ENCODE measurements at regions of chr2 and their contacts with region 1.

Region 1: DNA sequence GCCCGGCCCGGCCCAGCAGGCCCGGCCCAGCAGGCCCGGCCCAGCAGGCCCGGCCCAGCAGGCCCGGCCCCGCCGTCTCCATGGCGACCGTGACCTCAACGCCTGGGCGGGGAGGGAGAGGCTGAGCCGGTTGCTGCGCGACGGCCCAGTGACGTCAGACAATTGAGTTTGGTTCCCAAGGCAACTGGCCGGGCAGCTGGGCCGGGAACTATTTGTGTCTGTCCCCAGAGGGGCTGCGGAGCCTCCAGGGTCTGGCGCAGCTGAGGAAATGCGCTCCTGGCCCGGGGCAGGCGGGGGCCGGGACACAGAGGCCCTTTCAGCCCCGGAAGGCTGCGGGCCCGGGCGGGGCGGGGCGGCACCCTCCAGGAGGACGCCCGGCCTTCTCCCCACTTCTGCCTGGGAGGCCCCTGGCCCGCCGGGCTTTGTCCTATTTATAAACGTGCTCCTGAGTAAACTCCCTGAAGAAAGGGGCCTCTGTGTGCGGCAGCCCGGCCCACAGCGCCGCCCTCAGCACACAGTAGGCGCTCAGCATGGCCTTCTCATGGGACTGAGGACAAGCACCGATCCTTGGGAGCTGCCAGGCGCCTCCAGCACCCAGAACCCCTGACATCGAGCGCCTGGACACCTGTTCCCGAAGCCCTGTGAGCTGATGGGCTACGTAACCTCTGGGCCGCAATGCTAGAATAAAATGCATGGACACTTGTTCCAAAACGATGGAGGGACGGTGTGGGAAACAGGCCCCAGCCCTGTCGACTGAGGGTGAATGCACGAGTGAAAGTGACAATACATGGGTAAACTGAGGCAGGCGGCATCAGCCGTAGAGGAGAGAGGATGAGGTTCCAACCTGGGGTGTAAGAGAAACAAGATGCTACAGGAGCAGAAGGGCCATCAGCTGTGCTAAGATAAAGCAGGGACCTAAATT is 12.3 kb downstream of the TEX44 start:
- DNase-seq: peak; percentile 100
- ATAC-seq: peak; percentile 88 to 93 (median 88)
- H3K4me3 ChIP-seq: peak overlapping the region; percentile 78
- H3K27ac ChIP-seq: peak overlapping the region; percentile 99
- H3K4me1 ChIP-seq: peaks cover 25% of the 10 kb centered on the region
- H3K27me3 ChIP-seq: no peaks in the 10 kb centered on the region
- CTCF ChIP-seq: no peak

Region 2: DNA sequence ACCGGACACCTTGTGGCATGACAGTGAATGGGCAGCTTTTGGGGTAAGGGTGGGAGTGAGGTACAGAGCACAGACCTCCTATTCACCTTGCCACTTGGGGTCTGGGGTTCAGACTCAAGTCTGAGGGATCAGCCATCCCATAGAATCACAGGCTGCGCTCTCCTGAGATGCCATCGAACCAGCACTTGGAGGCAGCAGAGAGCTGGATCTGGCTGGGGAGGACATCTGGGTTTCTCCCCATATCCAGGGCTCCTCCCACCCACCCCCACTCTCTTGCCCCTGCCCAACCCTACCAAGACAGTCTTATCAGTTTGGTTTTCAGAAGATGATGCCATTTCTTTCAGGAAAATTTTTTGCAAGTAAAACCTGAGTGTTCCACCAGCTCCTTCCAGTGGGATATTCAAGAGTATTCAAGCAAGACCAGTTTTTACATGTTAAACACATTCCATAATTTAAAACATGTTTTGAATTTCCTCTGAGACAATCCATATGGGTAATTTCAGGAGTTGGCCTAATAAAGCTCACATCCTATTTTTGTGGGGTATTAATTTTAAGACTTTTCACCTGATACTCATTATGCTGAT is 41.5 kb before region 1 on chr2:
- intact Hi-C with region 1: loop called (anchors 2 to 5 kb)
- DNase-seq: peak; percentile 42 to 59
- ATAC-seq: peak in 3 of 4 donors; percentile 89 to 91 (median 91)
- H3K4me3 ChIP-seq: no peak overlapping the region
- H3K27ac ChIP-seq: no peak overlapping the region
- H3K4me1 ChIP-seq: no peaks in the 10 kb centered on the region
- H3K27me3 ChIP-seq: no peaks in the 10 kb centered on the region
- CTCF ChIP-seq: peak; percentile 65